ENCODE measurements at regions of chr7 and their contacts with region 1.

Region 1: DNA sequence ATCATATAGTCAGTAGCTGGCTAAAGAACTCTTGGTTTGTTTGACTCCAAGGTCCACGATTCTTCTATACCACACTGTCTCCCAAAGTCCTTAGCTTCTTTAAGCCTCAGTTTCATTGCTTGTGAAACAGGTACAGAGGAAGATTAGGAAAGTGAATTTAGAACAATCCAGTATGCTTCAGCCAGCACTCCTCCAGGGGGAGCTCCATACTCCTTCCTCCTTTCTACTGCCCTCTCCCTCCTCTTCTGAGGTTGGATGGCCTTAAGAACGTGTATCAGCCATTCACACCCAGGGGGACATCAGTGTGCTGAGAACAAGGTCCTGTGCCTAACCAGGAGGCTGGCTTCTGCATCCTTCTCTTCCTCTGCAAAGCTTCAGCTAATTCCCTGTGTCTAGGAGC is 54.8 kb upstream of the CALD1 start:
- DNase-seq: no peak
- H3K4me3 Mint-ChIP-seq: no peak overlapping the region
- H3K27ac Mint-ChIP-seq: peak overlapping the region; percentile 43
- H3K4me1 Mint-ChIP-seq: peaks cover 18% of the 10 kb centered on the region
- H3K27me3 Mint-ChIP-seq: no peaks in the 10 kb centered on the region

Region 2: DNA sequence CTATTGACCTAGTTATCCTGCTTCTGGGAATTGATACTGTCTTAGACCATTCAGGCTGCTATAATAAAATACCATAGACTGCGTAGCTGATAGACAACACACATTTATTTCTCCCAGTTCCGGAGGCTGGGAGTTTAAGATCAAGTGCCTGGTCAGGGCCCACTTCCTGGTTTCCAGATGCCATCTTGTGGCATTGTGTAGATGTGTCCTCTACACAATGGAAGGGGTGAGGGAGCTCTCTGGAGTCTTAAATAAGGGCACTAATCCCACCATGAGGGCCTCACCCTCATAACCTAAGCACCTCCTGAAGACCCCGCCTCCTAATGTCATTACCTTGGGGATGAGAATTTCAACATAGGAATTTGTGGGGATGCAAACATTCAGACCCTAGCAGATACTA is 470.3 kb before region 1 on chr7:
- intact Hi-C with region 1: no loop called
- DNase-seq: no peak
- H3K4me3 Mint-ChIP-seq: no peak overlapping the region
- H3K27ac Mint-ChIP-seq: no peak overlapping the region
- H3K4me1 Mint-ChIP-seq: no peaks in the 10 kb centered on the region
- H3K27me3 Mint-ChIP-seq: peaks cover 4% of the 10 kb centered on the region

Region 3: DNA sequence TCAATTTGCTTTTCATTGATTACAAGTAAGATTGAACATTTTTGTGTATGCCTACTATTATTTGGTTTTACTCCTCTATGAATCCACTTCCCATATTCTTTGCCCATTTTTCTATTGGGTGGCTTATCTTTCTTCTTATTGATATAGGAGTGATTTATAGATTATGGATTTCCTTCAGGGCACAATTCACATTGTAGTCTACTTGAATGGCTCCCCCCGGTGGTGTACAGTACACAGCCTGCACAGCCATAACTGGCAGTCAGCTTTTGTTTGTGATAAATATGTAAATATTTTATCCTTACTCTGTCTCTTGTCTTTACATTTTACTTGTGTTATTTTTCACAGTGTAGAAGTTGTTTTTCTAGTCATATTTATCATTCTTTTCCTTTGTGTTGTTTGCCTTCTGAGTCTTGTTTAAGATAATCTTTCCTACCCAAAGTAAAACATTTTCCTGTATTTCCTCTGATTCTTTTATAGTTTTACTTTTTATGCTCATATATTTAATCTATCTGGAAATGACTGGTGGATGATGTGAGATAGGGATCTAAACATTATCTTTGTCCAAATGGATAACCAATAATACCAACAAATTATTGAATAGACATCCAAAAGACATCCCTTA is 30.9 kb after region 1 on chr7:
- intact Hi-C with region 1: loop called (anchors 1 kb)
- DNase-seq: no peak
- H3K4me3 Mint-ChIP-seq: no peak overlapping the region
- H3K27ac Mint-ChIP-seq: no peak overlapping the region
- H3K4me1 Mint-ChIP-seq: peaks cover 28% of the 10 kb centered on the region
- H3K27me3 Mint-ChIP-seq: no peaks in the 10 kb centered on the region

Measured in activated T-helper 2 cell treated with anti-CD3 and anti-CD28 coated beads, Interferon-gamma antibody, Interleukin-2, Interleukin-4, amounts not matched to agents 10 μg/mL and 5 μg/mL and 100 μg/mL, durations not matched to agents 14 hours and 24 hours and 36 hours (primary cell).